ENCODE measurements at regions of chr5 and their contacts with region 1.

Region 1: GRCh38 chr5:73215891-73216610 is 43.1 kb downstream of the TMEM174 start:
- DNase-seq: peak in 1 of 2 donors; percentile 90
- H3K4me3 ChIP-seq: peak overlapping the region; percentile 43 to 63
- H3K27ac ChIP-seq: peak overlapping the region; percentile 38 to 70
- H3K4me1 ChIP-seq: no peaks in the 10 kb centered on the region
- H3K27me3 ChIP-seq: no peaks in the 10 kb centered on the region
- CTCF ChIP-seq: peak; percentile 77 to 89 (median 88)

Region 2: DNA sequence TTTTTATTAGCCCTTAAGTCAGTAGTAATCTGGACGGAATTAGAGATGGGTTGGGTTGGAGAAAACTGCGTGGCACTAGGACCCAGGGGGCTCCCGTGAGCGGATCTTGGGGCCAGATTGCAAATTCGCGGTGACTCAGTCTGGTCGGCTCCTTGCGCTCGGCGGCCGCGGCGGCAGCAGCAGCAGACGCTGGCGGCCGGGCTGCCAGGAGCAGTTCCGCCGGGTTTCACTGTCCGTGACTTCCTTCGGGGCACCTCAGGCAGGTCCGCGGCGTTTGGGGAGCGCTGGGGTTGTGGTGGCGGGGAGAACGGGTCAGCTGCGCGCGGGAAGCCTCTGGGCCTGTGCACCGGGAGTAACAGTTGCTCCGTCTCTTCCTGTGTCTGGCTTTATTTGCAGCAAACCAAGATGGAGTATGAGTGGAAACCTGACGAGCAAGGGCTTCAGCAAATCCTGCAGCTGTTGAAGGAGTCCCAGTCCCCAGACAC is 368.0 kb before region 1 on chr5:
- intact Hi-C with region 1: no loop called
- DNase-seq: peak; percentile 59 to 94
- H3K4me3 ChIP-seq: peak overlapping the region; percentile 89 to 97
- H3K27ac ChIP-seq: peak overlapping the region; percentile 90 to 94
- H3K4me1 ChIP-seq: peaks cover 8 to 41% of the 10 kb centered on the region in 2 donors
- H3K27me3 ChIP-seq: no peaks in the 10 kb centered on the region
- CTCF ChIP-seq: peak in 2 of 3 experiments; percentile 3 to 17

Region 3: GRCh38 chr5:73338256-73339050 is 122.4 kb after region 1 on chr5:
- intact Hi-C with region 1: loop called (anchors 1 kb)
- DNase-seq: no peak
- H3K4me3 ChIP-seq: peak overlapping the region in 1 of 2 donors; percentile 27
- H3K27ac ChIP-seq: peak overlapping the region; percentile 79 to 82
- H3K4me1 ChIP-seq: peaks cover 11 to 22% of the 10 kb centered on the region in 2 donors
- H3K27me3 ChIP-seq: no peaks in the 10 kb centered on the region
- CTCF ChIP-seq: no peak

Measured in ascending aorta (tissue), 2 donors.